GM13977 (cell line): ENCODE measurements at regions of chr6 and their contacts with region 1.

Region 1: GRCh38 chr6:25788305-25788922 is 33.9 kb downstream of the SLC17A4 start:
- DNase-seq: peak; percentile 2
- CTCF ChIP-seq: peak; percentile 45

Region 2: DNA sequence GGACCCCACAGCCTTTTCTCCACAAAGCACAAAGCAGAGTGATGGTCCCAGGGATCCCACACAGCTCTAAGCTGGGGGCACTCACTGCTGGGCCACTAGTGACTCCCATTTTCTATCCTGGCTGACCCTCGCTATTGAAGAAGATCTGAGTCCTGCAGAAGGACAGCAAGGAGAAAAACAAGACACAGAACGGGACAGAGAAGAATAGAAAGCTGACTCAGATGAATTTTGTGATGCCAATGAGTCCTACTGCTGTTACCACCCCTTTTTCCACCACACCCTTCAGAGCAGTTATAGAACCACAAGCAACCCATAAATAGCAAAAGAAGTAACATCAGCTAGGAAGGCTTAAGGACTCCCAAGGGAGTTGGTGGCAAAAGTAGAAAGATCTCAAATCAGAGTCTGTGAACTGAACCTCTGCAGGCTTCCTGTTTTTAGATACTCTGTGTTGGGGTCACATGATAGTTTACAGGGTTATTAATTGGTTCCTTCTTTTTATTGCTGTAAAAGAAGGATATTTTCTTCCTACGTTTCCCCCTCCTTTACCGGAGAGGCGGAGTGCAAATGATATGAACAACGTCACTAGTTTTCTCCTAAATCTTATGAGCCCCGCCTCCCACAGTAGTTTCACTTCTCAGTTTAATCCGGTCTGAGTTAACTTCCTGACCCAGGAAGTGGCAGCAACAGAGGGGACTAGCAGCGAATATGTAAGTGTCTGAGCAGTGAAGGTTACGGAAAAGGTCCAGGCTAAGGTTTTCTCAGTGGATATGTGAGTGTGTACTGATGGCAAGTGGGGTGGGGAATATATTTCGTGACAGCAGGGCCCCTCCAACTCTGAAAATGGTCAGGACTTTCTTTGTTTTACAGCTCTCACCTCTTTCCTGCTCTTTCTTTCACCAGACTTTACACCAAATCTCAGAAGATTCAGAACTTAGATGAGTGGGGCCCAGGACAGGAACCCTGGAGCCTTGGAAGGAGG is 174.0 kb after region 1 on chr6 and contains the start of gene TRIM38:
- in situ Hi-C with region 1: loop called (anchors 25 kb)
- DNase-seq: peak; percentile 61
- CTCF ChIP-seq: no peak